A549 (cell line): ENCODE measurements at regions of chr20 and their contacts with region 1.

Region 1: GRCh38 chr20:34312544-34313217 is 9.5 kb upstream of the AHCY start:
- DNase-seq: peak; percentile 79 to 90
- ATAC-seq: peak; percentile 92 to 94
- H3K4me3 ChIP-seq: peak overlapping the region; percentile 38
- H3K27ac ChIP-seq: peak overlapping the region; percentile 54 to 80
- H3K4me1 ChIP-seq: peaks cover 41% of the 10 kb centered on the region
- CTCF ChIP-seq: peak; percentile 100
- EP300 ChIP-seq: no peak
- POLR2A ChIP-seq: no peak
- RAD21 ChIP-seq: peak; percentile 100

Region 2: DNA sequence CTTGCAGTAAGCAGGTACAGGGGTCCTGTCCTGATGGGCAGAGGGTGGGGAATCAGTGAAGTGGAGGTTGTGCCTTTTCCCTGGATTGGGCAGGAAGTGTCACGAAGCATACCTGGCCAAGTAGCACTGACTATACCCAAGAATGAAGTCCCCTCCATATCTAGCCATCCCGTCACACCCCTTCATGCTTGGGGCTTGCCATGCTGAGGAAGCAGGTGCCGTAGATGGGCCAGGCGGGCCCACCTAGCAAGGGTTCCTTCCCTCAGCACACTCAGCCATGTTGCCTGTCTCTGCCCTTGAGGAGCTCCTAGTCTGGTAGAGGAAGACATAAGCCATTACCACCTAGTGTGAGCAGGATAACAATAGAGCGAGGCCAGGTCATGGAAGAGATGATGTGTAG is 234.1 kb before region 1 on chr20:
- CTCF ChIA-PET with region 1: no interaction called
- POLR2A ChIA-PET with region 1: no interaction called
- DNase-seq: no peak
- ATAC-seq: no peak
- H3K4me3 ChIP-seq: no peak overlapping the region
- H3K27ac ChIP-seq: no peak overlapping the region
- H3K4me1 ChIP-seq: no peaks in the 10 kb centered on the region
- CTCF ChIP-seq: no peak
- EP300 ChIP-seq: no peak
- POLR2A ChIP-seq: no peak
- RAD21 ChIP-seq: no peak

Region 3: DNA sequence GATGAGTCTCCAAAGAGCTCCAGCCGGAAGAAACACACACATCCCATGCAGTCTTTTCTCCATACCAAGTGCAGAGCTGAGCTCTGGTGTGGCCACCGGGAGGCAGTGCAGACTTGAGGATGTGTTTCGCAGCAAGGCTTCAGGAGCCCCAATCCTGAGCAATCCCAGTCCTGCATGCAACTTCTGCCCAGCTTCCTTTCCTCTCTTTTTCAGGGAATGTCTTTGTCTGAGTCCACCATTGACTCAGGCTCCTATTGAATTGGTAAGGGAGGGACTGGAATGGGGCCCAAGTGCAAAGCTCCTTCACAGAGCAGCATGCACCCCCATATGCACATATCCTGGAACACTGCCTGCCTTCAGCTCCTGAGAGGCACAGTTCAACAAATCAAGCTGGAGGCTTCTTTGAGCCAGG is 122.0 kb before region 1 on chr20:
- CTCF ChIA-PET with region 1: interaction called, 10 read pairs
- POLR2A ChIA-PET with region 1: no interaction called
- DNase-seq: peak; percentile 82 to 88
- ATAC-seq: peak; percentile 97 to 99
- H3K4me3 ChIP-seq: no peak overlapping the region
- H3K27ac ChIP-seq: no peak overlapping the region
- H3K4me1 ChIP-seq: no peaks in the 10 kb centered on the region
- CTCF ChIP-seq: peak; percentile 82
- EP300 ChIP-seq: no peak
- POLR2A ChIP-seq: no peak
- RAD21 ChIP-seq: peak; percentile 91 to 93

Region 4: DNA sequence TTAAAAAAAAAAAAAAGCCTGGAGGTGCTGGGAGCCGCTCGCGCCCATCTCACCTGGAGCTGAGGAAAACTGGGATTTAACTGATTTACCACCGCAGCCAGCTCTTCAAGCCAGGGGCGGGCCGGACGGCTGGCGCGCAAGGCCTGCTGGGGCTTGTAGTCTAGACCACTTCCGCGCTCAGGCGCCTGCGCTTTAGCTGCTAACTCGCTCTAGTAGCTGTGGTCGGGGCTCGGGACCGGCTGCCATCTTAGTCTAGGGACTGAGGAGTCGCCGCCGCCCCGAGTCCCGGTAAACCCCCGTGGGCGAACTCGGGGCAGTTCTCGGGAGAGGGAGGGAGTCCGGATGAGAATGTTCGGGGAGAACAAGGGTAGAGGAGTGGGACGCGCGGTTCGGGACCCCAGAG is 50.4 kb after region 1 on chr20 and contains the start of gene ITCH:
- CTCF ChIA-PET with region 1: interaction called, 77 read pairs
- POLR2A ChIA-PET with region 1: interaction called, 10 read pairs
- DNase-seq: peak; percentile 96 to 98
- ATAC-seq: peak; percentile 99 to 100
- H3K4me3 ChIP-seq: peak within 1 kb of the TSS; percentile 81
- H3K27ac ChIP-seq: peak within 1 kb of the TSS; percentile 97 to 98
- H3K4me1 ChIP-seq: peaks cover 40% of the 10 kb centered on the region
- CTCF ChIP-seq: no peak
- EP300 ChIP-seq: no peak
- POLR2A ChIP-seq: peak; percentile 80
- RAD21 ChIP-seq: no peak
- polyA plus RNA-seq, gene ITCH: 23.9 and 27.5 TPM in 2 replicates

Region 5: DNA sequence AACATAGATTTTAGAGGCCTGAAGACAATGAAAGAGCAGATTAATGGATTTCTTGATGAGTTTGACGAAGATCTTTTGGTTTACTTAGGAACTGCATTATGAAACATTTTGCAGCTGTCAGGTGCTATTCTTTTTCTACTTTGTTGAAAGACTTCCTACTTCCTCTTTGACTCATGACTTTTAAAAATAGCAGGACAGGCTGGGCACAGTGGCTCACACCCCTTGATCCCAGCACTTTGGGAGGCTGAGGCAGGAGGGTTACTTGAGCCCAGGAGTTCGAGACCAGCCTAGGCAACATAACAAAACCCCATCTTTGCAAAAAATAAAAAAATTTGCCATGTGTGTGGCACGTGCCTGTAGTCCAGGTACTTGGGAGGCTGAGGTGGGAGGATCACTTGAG is 102.4 kb after region 1 on chr20:
- CTCF ChIA-PET with region 1: interaction called, 43 read pairs
- POLR2A ChIA-PET with region 1: no interaction called
- DNase-seq: no peak
- ATAC-seq: no peak
- H3K4me3 ChIP-seq: no peak overlapping the region
- H3K27ac ChIP-seq: no peak overlapping the region
- H3K4me1 ChIP-seq: peaks cover 38% of the 10 kb centered on the region
- CTCF ChIP-seq: no peak
- EP300 ChIP-seq: no peak
- POLR2A ChIP-seq: no peak
- RAD21 ChIP-seq: no peak

Region 6: DNA sequence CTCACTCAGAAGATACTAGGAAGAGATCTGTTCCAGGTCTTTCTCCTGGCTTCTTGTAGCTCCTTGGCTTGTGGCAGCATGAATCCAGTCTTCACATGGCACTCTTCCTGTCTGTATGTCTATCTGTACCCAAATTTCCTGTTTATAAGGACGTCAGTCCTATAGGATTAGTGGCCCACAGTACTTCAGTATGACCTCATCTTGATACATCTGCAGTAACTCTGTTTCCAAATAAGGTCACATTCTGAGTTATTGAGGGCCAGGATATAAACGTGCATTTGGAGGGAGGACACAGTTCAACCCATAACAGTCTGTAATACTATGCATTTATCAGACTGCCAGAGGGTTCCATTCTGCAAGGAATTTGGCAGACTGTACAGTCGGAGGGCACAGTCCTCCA is 145.9 kb after region 1 on chr20:
- CTCF ChIA-PET with region 1: interaction called, 26 read pairs
- POLR2A ChIA-PET with region 1: no interaction called
- DNase-seq: no peak
- ATAC-seq: no peak
- H3K4me3 ChIP-seq: no peak overlapping the region
- H3K27ac ChIP-seq: no peak overlapping the region
- H3K4me1 ChIP-seq: no peaks in the 10 kb centered on the region
- CTCF ChIP-seq: no peak
- EP300 ChIP-seq: no peak
- POLR2A ChIP-seq: no peak
- RAD21 ChIP-seq: no peak

Region 7: DNA sequence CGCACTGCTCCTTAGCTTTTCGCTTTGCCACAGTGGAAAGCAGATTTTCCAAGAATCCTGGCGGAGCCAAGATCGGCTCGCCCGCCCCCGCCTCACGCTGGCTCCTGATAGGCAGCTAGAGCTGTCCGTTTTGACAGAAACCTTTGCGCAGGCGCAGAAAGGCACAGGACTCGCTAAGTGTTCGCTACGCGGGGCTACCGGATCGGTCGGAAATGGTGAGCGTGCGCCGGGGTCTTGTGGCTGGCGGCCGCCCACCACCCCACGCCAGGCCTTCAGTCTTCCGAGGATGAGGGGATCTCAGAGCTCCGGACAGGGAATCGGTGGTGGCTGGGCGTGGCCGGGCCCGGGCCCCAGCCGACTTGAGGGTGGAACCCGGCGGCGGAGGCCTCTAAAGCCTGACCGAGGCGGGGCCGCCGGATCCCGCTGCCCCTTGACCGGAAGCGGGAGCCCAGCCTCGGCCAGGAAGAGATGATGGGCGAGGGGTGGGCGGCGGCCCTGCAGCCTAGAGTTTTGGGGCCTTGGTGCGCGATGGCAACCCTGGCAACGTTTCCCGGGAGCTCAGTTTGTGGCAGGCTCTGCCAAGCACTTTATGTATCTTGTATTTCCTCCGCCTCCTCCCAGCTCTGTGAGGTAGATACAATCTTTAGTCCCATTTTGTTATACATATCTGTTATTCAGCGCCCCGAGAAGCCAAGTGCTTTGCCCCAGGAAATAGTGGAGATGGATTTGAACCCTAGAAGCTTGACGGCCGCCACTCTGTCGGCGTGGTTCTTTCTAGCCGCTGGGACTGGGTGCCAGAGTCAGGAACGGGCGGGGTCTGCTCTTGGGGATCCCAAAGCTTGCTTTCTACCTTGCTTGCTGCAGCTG is 203.8 kb after region 1 on chr20 and contains the start of gene DYNLRB1:
- CTCF ChIA-PET with region 1: interaction called, 106 read pairs
- POLR2A ChIA-PET with region 1: interaction called, 10 read pairs
- DNase-seq: peak; percentile 93 to 96
- ATAC-seq: peak; percentile 93 to 96
- H3K4me3 ChIP-seq: peak within 1 kb of the TSS; percentile 80
- H3K27ac ChIP-seq: peak within 1 kb of the TSS; percentile 95 to 96
- H3K4me1 ChIP-seq: peaks cover 24% of the 10 kb centered on the region
- CTCF ChIP-seq: no peak
- EP300 ChIP-seq: no peak
- POLR2A ChIP-seq: peak; percentile 74
- RAD21 ChIP-seq: no peak
- polyA plus RNA-seq, gene DYNLRB1: 148 and 204 TPM in 2 replicates

Region 8: GRCh38 chr20:34654207-34654744 is 341.6 kb after region 1 on chr20:
- CTCF ChIA-PET with region 1: no interaction called
- POLR2A ChIA-PET with region 1: no interaction called
- DNase-seq: no peak
- ATAC-seq: no peak
- H3K4me3 ChIP-seq: no peak overlapping the region
- H3K27ac ChIP-seq: no peak overlapping the region
- H3K4me1 ChIP-seq: no peaks in the 10 kb centered on the region
- CTCF ChIP-seq: no peak
- EP300 ChIP-seq: no peak
- POLR2A ChIP-seq: no peak
- RAD21 ChIP-seq: no peak

Region 9: GRCh38 chr20:34704177-34705007 is 391.7 kb after region 1 on chr20 and contains the start of gene TP53INP2:
- CTCF ChIA-PET with region 1: interaction called, 27 read pairs
- POLR2A ChIA-PET with region 1: no interaction called
- DNase-seq: peak; percentile 82 to 89
- ATAC-seq: peak; percentile 50 to 66
- H3K4me3 ChIP-seq: peak within 1 kb of the TSS; percentile 94
- H3K27ac ChIP-seq: peak within 1 kb of the TSS; percentile 80 to 93
- H3K4me1 ChIP-seq: peaks cover 26% of the 10 kb centered on the region
- CTCF ChIP-seq: no peak
- EP300 ChIP-seq: no peak
- POLR2A ChIP-seq: no peak
- RAD21 ChIP-seq: no peak
- polyA plus RNA-seq, gene TP53INP2: 2.2 and 3.6 TPM in 2 replicates